Right ventricle myocardium superior (tissue), 1 donor: ENCODE measurements at regions of chrX and their contacts with region 1.

Region 1: DNA sequence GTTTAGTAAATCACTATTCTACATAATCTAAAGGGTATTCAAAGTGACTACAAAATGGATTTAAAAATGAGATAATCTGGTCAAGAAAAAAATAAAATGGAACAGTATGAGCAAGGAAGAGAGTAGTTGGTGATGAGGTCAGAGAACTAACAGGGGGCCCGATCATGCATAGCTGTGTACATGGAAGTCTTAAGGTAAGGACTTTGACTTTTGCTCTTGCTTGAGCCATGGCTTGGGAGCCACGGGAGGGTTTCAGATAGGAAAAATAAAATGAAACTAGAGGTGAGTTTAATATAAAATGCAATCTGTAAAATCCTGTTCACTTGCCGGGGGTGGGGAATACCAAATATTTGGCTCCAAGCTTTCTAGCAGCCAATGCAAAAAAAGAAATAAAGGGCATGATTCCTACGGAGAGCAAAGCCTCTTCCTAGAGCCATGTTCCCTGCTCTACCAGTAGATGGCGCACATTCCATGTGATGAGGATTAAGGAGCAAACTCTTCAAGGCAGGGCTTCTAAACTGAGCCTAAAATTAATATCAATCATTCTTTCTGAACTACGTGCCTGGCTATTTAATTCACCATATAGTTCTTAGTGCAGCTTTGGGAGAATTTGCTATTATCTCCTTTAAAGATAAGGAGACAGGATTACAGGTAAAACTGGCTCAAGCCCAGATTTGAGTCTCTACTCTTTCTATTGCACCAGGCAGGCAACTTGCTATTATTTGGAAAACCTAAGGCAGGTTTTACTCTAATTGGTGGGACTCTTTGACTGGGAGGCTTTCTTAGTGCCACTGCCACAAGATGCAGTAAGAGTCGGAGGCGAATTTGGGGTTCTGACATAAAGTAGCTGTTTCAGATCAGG is 6.8 kb upstream of the CLCN5 start:
- DNase-seq: no peak
- ATAC-seq: peak; percentile 83

Region 2: DNA sequence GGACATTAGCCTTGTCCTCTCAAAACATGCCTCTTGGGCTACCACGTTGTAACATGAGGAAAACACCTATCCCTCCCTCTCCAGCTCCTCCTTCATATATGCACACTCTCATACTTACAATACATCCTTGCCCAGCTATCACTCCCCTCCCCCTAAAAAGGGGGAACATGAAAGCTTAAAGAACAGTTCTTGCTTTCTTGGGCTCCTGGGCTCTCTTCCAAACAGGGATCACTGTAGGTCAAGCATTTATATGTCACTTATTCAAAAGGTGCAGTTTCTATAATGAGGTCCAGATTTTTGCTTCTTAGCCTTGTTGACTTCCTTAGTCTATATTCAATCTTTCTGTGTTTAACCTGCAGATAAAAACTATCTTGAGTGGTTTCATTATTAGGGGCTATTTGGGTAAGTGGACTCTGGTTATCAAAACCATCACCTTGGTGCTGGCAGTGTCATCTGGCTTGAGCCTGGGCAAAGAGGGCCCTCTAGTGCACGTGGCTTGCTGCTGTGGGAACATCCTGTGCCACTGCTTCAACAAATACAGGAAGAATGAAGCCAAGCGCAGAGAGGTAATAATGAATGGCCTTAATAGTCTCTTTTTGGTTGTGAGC is 165.8 kb after region 1 on chrX:
- intact Hi-C with region 1: loop called (anchors 5 kb)
- DNase-seq: peak; percentile 42
- ATAC-seq: peak; percentile 80